ENCODE measurements at regions of chr2 and their contacts with region 1.

Region 1: GRCh38 chr2:211440107-211440506 is 883.7 kb downstream of the CPS1 start:
- DNase-seq: no peak
- ATAC-seq: no peak
- H3K4me3 ChIP-seq: no peak overlapping the region
- H3K27ac ChIP-seq: no peak overlapping the region
- H3K4me1 ChIP-seq: no peaks in the 10 kb centered on the region
- H3K27me3 ChIP-seq: no peaks in the 10 kb centered on the region
- CTCF ChIP-seq: no peak
- EP300 ChIP-seq: no peak
- POLR2A ChIP-seq: no peak
- RAD21 ChIP-seq: no peak

Region 2: DNA sequence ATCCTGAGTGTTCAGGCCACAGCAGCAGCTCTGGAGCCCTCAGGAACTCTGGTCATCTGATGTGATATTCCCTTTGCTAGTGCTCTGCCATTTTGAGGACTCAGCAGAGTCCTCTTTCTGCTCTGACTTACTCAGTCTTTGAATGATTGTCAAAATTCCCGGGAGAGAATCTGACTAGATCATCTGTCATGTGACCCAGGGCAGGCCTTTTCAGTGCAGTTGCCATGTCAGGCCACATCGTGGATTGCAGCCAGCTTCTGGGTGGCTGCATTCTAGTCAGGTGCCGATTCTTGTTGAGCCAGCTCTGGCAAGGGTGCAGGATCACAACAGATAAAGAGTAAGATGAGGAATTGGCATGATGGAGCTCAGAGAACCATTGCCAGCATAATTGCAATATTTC is 88.1 kb before region 1 on chr2:
- CTCF ChIA-PET with region 1: no interaction called
- POLR2A ChIA-PET with region 1: no interaction called
- in situ Hi-C with region 1: no loop called
- intact Hi-C with region 1: no loop called
- DNase-seq: no peak
- ATAC-seq: no peak
- H3K4me3 ChIP-seq: no peak overlapping the region
- H3K27ac ChIP-seq: no peak overlapping the region
- H3K4me1 ChIP-seq: no peaks in the 10 kb centered on the region
- H3K27me3 ChIP-seq: no peaks in the 10 kb centered on the region
- CTCF ChIP-seq: no peak
- EP300 ChIP-seq: no peak
- POLR2A ChIP-seq: no peak
- RAD21 ChIP-seq: no peak

Region 3: DNA sequence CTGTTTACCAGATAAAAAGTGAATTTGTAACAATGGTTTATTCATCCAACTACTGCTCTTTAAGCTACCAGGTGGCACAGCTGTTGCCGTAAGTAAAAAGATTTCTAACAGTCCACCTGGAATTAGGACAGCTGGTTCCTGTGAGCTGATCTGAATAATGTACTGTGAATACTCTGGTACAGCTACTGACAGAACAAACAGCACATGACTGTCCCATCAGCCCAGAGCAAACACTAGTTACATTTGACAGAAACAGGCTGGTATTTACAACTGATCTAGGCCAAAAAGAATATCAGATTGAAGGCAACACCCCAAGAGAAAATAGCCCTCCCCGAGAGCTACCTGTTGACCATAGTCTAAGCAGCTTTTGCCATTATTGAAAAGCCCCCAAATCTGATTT is 43.3 kb before region 1 on chr2:
- CTCF ChIA-PET with region 1: no interaction called
- POLR2A ChIA-PET with region 1: no interaction called
- in situ Hi-C with region 1: no loop called
- intact Hi-C with region 1: no loop called
- DNase-seq: no peak
- ATAC-seq: peak; percentile 52
- H3K4me3 ChIP-seq: no peak overlapping the region
- H3K27ac ChIP-seq: no peak overlapping the region
- H3K4me1 ChIP-seq: no peaks in the 10 kb centered on the region
- H3K27me3 ChIP-seq: no peaks in the 10 kb centered on the region; a peak in 1 of 5 replicates
- CTCF ChIP-seq: no peak
- EP300 ChIP-seq: no peak
- POLR2A ChIP-seq: no peak
- RAD21 ChIP-seq: no peak

Region 4: GRCh38 chr2:211812587-211812986 is 372.5 kb after region 1 on chr2:
- CTCF ChIA-PET with region 1: no interaction called
- POLR2A ChIA-PET with region 1: no interaction called
- in situ Hi-C with region 1: no loop called
- intact Hi-C with region 1: loop called (anchors 5 kb)
- DNase-seq: no peak
- ATAC-seq: peak; percentile 79
- H3K4me3 ChIP-seq: no peak overlapping the region
- H3K27ac ChIP-seq: no peak overlapping the region
- H3K4me1 ChIP-seq: no peaks in the 10 kb centered on the region
- H3K27me3 ChIP-seq: no peaks in the 10 kb centered on the region
- CTCF ChIP-seq: no peak
- EP300 ChIP-seq: no peak
- POLR2A ChIP-seq: no peak
- RAD21 ChIP-seq: no peak

Measured in HepG2 (cell line).